ENCODE measurements at regions of chr19 and their contacts with region 1.

Region 1: DNA sequence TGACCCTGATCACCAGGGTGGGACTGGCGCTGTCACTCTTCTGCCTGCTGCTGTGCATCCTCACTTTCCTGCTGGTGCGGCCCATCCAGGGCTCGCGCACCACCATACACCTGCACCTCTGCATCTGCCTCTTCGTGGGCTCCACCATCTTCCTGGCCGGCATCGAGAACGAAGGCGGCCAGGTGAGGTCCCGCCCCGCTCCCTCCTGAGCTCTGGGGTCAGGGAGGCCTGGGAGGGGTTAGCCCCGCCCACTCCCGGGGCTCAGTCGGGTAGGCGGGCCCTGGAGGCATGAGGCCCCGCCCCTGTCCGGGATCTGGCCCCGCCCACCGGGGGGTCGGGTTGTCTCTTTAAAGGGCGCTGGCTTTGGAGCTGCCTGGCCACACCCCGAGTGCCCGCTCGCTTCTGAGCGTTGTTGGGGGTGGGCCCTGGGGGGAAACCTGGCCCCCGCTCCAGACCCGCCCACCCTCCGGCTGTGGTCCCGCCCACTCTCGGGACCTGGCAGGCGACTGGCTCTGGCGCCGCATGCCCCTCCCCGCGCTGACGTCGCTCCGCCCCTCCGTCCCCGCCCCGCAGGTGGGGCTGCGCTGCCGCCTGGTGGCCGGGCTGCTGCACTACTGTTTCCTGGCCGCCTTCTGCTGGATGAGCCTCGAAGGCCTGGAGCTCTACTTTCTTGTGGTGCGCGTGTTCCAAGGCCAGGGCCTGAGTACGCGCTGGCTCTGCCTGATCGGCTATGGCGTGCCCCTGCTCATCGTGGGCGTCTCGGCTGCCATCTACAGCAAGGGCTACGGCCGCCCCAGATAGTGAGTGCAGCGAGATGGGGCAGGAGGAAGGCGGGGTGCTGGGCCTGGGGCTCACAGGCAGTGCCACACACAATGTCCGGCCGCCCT is 13.1 kb downstream of the DDX39A start:
- DNase-seq: peak; percentile 93
- ATAC-seq: peak; percentile 88
- H3K4me3 Mint-ChIP-seq: no peak overlapping the region
- H3K27ac Mint-ChIP-seq: peak overlapping the region; percentile 56
- H3K4me1 Mint-ChIP-seq: peaks cover 37% of the 10 kb centered on the region
- H3K27me3 Mint-ChIP-seq: no peaks in the 10 kb centered on the region
- CTCF ChIP-seq: no peak

Region 2: GRCh38 chr19:14198384-14199376 is 207.3 kb before region 1 on chr19:
- CTCF ChIA-PET with region 1: no interaction called
- POLR2A ChIA-PET with region 1: no interaction called
- intact Hi-C with region 1: loop called (anchors 1 kb)
- DNase-seq: no peak
- ATAC-seq: no peak
- H3K4me3 Mint-ChIP-seq: no peak overlapping the region
- H3K27ac Mint-ChIP-seq: no peak overlapping the region
- H3K4me1 Mint-ChIP-seq: peaks cover 10% of the 10 kb centered on the region
- H3K27me3 Mint-ChIP-seq: peaks cover 5% of the 10 kb centered on the region
- CTCF ChIP-seq: no peak

Region 3: GRCh38 chr19:14347999-14348889 is 57.8 kb before region 1 on chr19:
- CTCF ChIA-PET with region 1: interaction called, 17 read pairs
- POLR2A ChIA-PET with region 1: interaction called, 3 read pairs
- intact Hi-C with region 1: no loop called
- DNase-seq: peak; percentile 66
- ATAC-seq: peak; percentile 80
- H3K4me3 Mint-ChIP-seq: peak overlapping the region; percentile 57
- H3K27ac Mint-ChIP-seq: peak overlapping the region; percentile 24
- H3K4me1 Mint-ChIP-seq: peaks cover 27% of the 10 kb centered on the region
- H3K27me3 Mint-ChIP-seq: no peaks in the 10 kb centered on the region
- CTCF ChIP-seq: peak; percentile 83

Region 4: DNA sequence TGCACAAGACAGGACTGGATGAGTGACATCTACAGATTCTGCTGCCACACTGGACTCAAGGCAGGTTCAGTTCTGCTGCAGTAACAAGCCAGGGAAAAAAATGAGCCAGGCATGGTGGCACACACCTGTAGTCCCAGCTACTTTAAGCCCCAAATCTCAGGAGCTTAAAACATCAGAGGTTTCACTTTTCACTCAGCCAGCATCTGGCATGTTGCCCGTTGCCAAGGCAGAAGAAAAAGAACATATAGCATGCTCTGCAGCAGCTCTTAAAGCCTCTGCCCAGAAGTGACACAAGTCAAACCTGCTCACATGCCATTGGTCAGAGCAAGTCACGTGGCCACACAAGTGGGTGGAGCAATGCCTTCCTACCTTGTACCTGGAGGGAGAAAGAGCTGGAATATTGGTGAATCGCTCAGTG is 39.5 kb before region 1 on chr19:
- CTCF ChIA-PET with region 1: interaction called, 76 read pairs
- POLR2A ChIA-PET with region 1: interaction called, 32 read pairs
- intact Hi-C with region 1: loop called (anchors 1 kb)
- DNase-seq: peak; percentile 63
- ATAC-seq: peak; percentile 38
- H3K4me3 Mint-ChIP-seq: peak overlapping the region; percentile 22
- H3K27ac Mint-ChIP-seq: peak overlapping the region; percentile 93
- H3K4me1 Mint-ChIP-seq: peaks cover 77% of the 10 kb centered on the region
- H3K27me3 Mint-ChIP-seq: no peaks in the 10 kb centered on the region
- CTCF ChIP-seq: no peak

Region 5: GRCh38 chr19:14419106-14419813 is 13.3 kb after region 1 on chr19 and contains the start of gene DDX39A:
- CTCF ChIA-PET with region 1: interaction called, 5 read pairs
- POLR2A ChIA-PET with region 1: interaction called, 18 read pairs
- intact Hi-C with region 1: no loop called
- DNase-seq: peak; percentile 83
- ATAC-seq: peak; percentile 91
- H3K4me3 Mint-ChIP-seq: peak within 1 kb of the TSS; percentile 99
- H3K27ac Mint-ChIP-seq: peak within 1 kb of the TSS; percentile 99
- H3K4me1 Mint-ChIP-seq: peaks cover 44% of the 10 kb centered on the region
- H3K27me3 Mint-ChIP-seq: no peaks in the 10 kb centered on the region
- CTCF ChIP-seq: no peak
- total RNA-seq, gene DDX39A: 210 and 211 TPM in 2 replicates

Region 6: DNA sequence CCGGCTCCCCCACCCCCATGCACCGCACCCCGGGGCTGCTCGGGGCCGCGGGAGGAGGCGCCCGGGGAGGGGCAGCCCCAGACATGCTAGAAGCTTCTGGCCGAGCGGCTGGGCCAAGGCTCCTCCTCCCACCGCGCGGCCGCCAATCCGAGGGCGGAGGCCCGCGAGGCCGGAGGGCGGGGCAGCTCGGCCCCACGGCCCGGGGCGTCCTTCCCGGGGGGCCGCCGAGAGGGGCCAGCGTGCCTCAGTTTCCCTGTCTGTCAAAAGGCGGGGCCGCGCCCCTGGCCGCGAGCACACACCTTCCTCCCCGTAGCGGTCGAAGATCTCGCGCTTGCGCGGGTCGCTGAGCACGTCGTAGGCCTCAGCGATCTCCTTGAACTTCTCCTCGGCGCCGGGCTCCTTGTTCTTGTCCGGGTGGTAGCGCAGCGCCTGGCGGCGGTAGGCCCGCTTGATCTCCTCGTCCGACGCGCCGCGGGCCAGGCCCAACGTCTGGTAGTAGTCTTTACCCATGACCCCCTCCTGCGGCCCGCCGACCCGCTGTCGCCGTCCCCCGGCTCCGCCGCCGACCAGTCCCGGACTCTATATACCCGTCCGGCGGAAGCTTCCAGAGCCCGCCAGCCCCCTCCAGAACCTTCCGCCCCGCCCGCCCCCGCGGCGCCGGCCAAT is 112.0 kb after region 1 on chr19 and contains the start of gene DNAJB1:
- CTCF ChIA-PET with region 1: no interaction called
- POLR2A ChIA-PET with region 1: no interaction called
- intact Hi-C with region 1: no loop called
- DNase-seq: peak; percentile 78
- ATAC-seq: peak; percentile 48
- H3K4me3 Mint-ChIP-seq: peak within 1 kb of the TSS; percentile 91
- H3K27ac Mint-ChIP-seq: peak within 1 kb of the TSS; percentile 95
- H3K4me1 Mint-ChIP-seq: peaks cover 65% of the 10 kb centered on the region
- H3K27me3 Mint-ChIP-seq: no peaks in the 10 kb centered on the region
- CTCF ChIP-seq: no peak
- total RNA-seq, gene DNAJB1: 56.1 and 58.7 TPM in 2 replicates

Region 7: DNA sequence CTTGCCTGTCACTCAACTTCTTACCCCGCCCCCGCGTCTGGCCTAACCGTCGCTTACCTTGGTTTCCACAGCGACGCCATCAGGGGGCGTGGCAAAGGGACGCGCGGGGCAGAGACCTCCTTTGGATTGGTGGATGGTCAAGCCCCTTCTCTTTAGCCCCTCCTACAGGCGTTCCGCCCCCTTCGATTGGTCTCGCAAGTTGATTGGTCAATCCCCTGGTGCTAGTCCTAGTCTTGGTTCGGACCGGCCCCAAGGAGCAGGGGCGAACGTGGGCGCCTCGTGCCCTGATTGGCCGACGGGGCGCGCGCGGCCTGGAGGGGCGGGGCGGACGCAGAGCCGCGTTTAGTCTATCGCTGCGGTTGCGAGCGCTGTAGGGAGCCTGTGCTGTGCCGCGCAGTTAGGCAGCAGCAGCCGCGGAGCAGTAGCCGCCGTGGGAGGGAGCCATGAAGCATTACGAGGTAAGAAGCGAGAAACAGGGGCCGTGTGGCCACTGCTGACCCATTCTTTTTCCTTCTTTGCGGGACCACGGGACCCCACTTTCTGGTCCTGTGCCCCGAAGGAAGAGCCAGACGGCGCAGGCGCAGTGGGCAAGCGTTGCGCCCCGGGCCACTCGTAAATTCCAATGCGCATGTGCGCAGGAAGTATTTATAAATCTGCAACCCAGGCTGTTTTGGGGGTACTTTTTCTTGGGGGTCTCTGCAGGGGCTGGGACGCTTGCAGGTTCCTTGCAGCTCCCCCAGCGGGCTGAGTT is 123.4 kb after region 1 on chr19 and contains the start of gene TECR:
- CTCF ChIA-PET with region 1: no interaction called
- POLR2A ChIA-PET with region 1: no interaction called
- intact Hi-C with region 1: no loop called
- DNase-seq: peak; percentile 99
- ATAC-seq: peak; percentile 96
- H3K4me3 Mint-ChIP-seq: peak within 1 kb of the TSS; percentile 95
- H3K27ac Mint-ChIP-seq: peak within 1 kb of the TSS; percentile 96
- H3K4me1 Mint-ChIP-seq: peaks cover 31% of the 10 kb centered on the region
- H3K27me3 Mint-ChIP-seq: no peaks in the 10 kb centered on the region
- CTCF ChIP-seq: no peak
- total RNA-seq, gene TECR: 55.3 and 58.6 TPM in 2 replicates